ENCODE measurements at regions of chr3 and their contacts with region 1.

Region 1: DNA sequence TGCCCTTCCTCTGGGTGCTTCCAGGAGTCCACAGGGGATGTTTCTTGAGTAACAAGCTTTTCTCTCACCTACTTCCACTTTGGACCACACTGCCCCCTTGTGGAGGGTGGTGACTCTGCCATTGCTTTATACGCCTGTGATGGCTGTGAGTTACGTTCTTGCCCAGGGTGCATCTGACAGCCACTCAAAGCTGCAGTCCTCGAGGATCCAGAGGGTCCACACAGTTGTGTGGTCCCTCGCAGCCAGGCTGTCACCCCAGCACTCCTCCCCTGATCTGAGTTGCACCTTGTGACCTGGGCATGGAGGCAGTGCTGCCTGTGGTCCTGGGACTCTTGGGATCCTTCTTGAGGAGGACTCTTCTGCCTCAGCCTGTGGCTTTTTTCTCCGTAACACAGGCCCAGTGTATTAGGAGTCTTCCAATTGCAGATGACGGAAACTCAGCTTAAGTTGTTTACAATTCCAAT is 23.4 kb downstream of the FOXL2 start:
- DNase-seq: peak; percentile 84
- ATAC-seq: peak; percentile 88
- H3K4me3 ChIP-seq: no peak overlapping the region
- H3K4me3 Mint-ChIP-seq: no peak overlapping the region
- H3K27ac ChIP-seq: no peak overlapping the region
- H3K27ac Mint-ChIP-seq: no peak overlapping the region
- H3K4me1 ChIP-seq: peaks cover 0 to 3% of the 10 kb centered on the region in 2 donors
- H3K4me1 Mint-ChIP-seq: no peaks in the 10 kb centered on the region
- H3K27me3 ChIP-seq: peaks cover 0 to 20% (median 6%) of the 10 kb centered on the region in 4 experiments
- H3K27me3 Mint-ChIP-seq: peaks cover 29% of the 10 kb centered on the region
- CTCF ChIP-seq: peak; percentile 86

Region 2: GRCh38 chr3:138417559-138417982 is 506.0 kb before region 1 on chr3:
- CTCF ChIA-PET with region 1: interaction called, 84 read pairs
- POLR2A ChIA-PET with region 1: no interaction called
- intact Hi-C with region 1: loop called (anchors 1 kb)
- DNase-seq: peak; percentile 62
- ATAC-seq: peak; percentile 51
- H3K4me3 ChIP-seq: no peak overlapping the region
- H3K4me3 Mint-ChIP-seq: no peak overlapping the region
- H3K27ac ChIP-seq: no peak overlapping the region
- H3K27ac Mint-ChIP-seq: no peak overlapping the region
- H3K4me1 ChIP-seq: no peaks in the 10 kb centered on the region
- H3K4me1 Mint-ChIP-seq: no peaks in the 10 kb centered on the region
- H3K27me3 ChIP-seq: peaks cover 0 to 25% (median 7%) of the 10 kb centered on the region in 4 experiments
- H3K27me3 Mint-ChIP-seq: peaks cover 64% of the 10 kb centered on the region
- CTCF ChIP-seq: peak; percentile 79

Region 3: GRCh38 chr3:138479438-138479863 is 444.1 kb before region 1 on chr3:
- CTCF ChIA-PET with region 1: interaction called, 11 read pairs
- POLR2A ChIA-PET with region 1: no interaction called
- intact Hi-C with region 1: loop called (anchors 2 kb)
- DNase-seq: peak; percentile 31
- ATAC-seq: no peak
- H3K4me3 ChIP-seq: no peak overlapping the region
- H3K4me3 Mint-ChIP-seq: no peak overlapping the region
- H3K27ac ChIP-seq: no peak overlapping the region
- H3K27ac Mint-ChIP-seq: no peak overlapping the region
- H3K4me1 ChIP-seq: no peaks in the 10 kb centered on the region
- H3K4me1 Mint-ChIP-seq: no peaks in the 10 kb centered on the region
- H3K27me3 ChIP-seq: peaks cover 0 to 4% (median 0%) of the 10 kb centered on the region in 4 experiments
- H3K27me3 Mint-ChIP-seq: peaks cover 25% of the 10 kb centered on the region
- CTCF ChIP-seq: peak; percentile 51

Region 4: DNA sequence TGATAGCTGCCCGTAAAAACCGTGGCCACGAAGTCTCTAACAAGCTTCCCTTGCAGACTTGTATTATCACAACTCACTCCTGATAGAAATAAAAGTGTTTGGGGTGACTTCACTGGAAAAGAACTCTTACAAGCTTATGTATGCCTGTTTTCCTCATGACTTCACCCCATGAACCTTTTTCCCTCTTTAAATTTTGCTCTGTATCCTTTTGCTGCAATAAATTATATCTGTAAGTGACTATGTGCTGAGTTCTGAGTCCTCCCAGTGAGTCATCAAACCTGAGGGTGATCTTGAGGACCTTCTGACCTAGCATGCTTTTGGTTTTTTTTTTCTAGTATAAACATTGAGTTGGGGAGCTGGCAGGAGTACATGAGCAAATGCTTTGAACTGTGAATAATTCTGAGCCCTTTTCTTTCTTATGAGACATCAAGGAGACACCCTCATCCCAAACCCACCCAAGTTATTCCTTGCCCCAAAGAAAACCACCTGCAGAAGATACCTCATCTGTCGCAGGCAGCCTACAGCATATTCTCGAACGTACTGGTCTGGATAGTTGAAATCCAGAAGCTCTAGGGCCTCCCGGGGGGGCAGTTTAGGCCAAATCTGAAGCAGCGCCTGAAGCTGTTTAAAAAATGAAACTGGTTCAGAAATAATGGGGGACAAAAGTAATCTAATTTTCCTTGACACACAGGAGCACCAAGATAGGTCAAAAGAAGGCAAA is 229.1 kb before region 1 on chr3:
- CTCF ChIA-PET with region 1: interaction called, 18 read pairs
- POLR2A ChIA-PET with region 1: no interaction called
- intact Hi-C with region 1: no loop called
- DNase-seq: no peak
- ATAC-seq: no peak
- H3K4me3 ChIP-seq: no peak overlapping the region
- H3K4me3 Mint-ChIP-seq: no peak overlapping the region
- H3K27ac ChIP-seq: no peak overlapping the region
- H3K27ac Mint-ChIP-seq: no peak overlapping the region
- H3K4me1 ChIP-seq: no peaks in the 10 kb centered on the region
- H3K4me1 Mint-ChIP-seq: no peaks in the 10 kb centered on the region
- H3K27me3 ChIP-seq: no peaks in the 10 kb centered on the region
- H3K27me3 Mint-ChIP-seq: no peaks in the 10 kb centered on the region
- CTCF ChIP-seq: no peak

Region 5: GRCh38 chr3:138712086-138712485 is 211.5 kb before region 1 on chr3:
- CTCF ChIA-PET with region 1: no interaction called
- POLR2A ChIA-PET with region 1: no interaction called
- intact Hi-C with region 1: no loop called
- DNase-seq: no peak
- ATAC-seq: no peak
- H3K4me3 ChIP-seq: no peak overlapping the region
- H3K4me3 Mint-ChIP-seq: no peak overlapping the region
- H3K27ac ChIP-seq: no peak overlapping the region
- H3K27ac Mint-ChIP-seq: no peak overlapping the region
- H3K4me1 ChIP-seq: no peaks in the 10 kb centered on the region
- H3K4me1 Mint-ChIP-seq: no peaks in the 10 kb centered on the region
- H3K27me3 ChIP-seq: no peaks in the 10 kb centered on the region
- H3K27me3 Mint-ChIP-seq: no peaks in the 10 kb centered on the region
- CTCF ChIP-seq: no peak

Region 6: DNA sequence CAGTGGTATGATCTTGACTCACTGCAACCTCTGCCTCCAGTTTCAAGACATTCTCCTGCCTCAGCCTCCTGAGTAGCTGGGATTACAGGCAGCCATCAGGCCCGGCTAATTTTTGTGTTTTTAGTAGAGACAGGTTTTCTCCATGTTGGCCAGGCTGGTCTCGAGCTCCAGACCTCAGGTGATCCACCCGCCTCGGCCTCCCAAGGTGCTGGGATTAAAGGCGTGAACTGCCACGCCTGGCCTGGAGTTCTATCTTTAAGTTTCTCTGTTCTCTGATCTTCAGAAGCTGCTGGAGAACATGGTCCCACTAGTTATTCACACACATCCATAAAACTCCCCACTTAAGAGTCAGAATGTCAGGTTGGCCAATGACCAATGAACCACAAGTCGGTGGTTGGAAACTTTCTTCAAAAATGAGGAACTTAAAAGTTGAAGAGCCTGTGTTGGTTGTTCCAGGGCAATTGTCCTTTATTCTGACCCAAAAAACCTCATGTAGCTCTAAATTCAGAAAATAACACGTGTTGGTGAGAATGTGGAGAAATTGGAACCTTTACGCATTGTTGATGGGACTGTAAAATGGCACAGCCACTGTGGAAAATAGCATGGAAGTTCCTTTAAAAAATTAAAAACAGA is 32.9 kb before region 1 on chr3:
- CTCF ChIA-PET with region 1: interaction called, 12 read pairs
- POLR2A ChIA-PET with region 1: no interaction called
- intact Hi-C with region 1: no loop called
- DNase-seq: peak; percentile 38
- ATAC-seq: peak; percentile 49
- H3K4me3 ChIP-seq: no peak overlapping the region
- H3K4me3 Mint-ChIP-seq: peak overlapping the region; percentile 55
- H3K27ac ChIP-seq: no peak overlapping the region
- H3K27ac Mint-ChIP-seq: peak overlapping the region; percentile 71
- H3K4me1 ChIP-seq: peaks cover 6 to 10% of the 10 kb centered on the region in 2 donors
- H3K4me1 Mint-ChIP-seq: peaks cover 17% of the 10 kb centered on the region
- H3K27me3 ChIP-seq: no peaks in the 10 kb centered on the region
- H3K27me3 Mint-ChIP-seq: no peaks in the 10 kb centered on the region
- CTCF ChIP-seq: no peak

Region 7: GRCh38 chr3:138935848-138936740 is 12.5 kb after region 1 on chr3:
- CTCF ChIA-PET with region 1: interaction called, 157 read pairs
- POLR2A ChIA-PET with region 1: no interaction called
- intact Hi-C with region 1: no loop called
- DNase-seq: peak; percentile 77
- ATAC-seq: peak; percentile 87
- H3K4me3 ChIP-seq: peak overlapping the region in 4 of 5 experiments; percentile 10 to 55 (median 38)
- H3K4me3 Mint-ChIP-seq: peak overlapping the region; percentile 80
- H3K27ac ChIP-seq: no peak overlapping the region
- H3K27ac Mint-ChIP-seq: no peak overlapping the region
- H3K4me1 ChIP-seq: peaks cover 46 to 47% of the 10 kb centered on the region in 2 donors
- H3K4me1 Mint-ChIP-seq: peaks cover 32% of the 10 kb centered on the region
- H3K27me3 ChIP-seq: peaks cover 0 to 80% (median 58%) of the 10 kb centered on the region in 4 experiments
- H3K27me3 Mint-ChIP-seq: peaks cover 66% of the 10 kb centered on the region
- CTCF ChIP-seq: peak; percentile 97